Calu3 (cell line): ENCODE measurements at regions of chr9 and their contacts with region 1.

Region 1: DNA sequence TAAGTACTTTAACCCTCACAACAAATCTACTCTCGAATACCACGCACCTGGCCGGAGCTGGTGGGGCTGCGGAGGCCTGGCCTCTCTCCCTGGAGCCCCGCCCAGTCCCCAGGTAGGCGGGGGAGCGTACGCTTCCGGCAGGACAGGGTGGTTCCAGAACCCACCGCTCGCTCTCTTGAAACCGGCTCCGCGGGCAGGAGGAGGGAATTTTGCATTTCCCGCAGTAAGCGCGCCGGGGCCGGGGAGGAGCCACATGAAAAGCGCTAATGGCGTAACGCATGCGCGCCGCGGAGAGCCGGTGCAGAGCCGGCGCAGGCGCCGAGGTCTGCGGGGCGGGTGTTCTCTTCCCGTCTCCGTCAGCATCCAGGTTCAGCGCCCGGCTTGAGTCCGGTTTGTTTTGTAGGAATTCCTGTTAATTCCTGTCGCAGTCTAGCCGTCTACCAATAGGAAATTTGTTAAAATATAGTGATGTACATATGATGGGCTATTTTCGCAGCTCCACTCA is 20.8 kb downstream of the CAVIN4 start:
- DNase-seq: peak; percentile 87
- H3K4me3 Mint-ChIP-seq: peak overlapping the region; percentile 48
- H3K27ac Mint-ChIP-seq: no peak overlapping the region
- H3K4me1 Mint-ChIP-seq: peaks cover 21% of the 10 kb centered on the region
- H3K27me3 Mint-ChIP-seq: no peaks in the 10 kb centered on the region
- CTCF ChIP-seq: no peak

Region 2: DNA sequence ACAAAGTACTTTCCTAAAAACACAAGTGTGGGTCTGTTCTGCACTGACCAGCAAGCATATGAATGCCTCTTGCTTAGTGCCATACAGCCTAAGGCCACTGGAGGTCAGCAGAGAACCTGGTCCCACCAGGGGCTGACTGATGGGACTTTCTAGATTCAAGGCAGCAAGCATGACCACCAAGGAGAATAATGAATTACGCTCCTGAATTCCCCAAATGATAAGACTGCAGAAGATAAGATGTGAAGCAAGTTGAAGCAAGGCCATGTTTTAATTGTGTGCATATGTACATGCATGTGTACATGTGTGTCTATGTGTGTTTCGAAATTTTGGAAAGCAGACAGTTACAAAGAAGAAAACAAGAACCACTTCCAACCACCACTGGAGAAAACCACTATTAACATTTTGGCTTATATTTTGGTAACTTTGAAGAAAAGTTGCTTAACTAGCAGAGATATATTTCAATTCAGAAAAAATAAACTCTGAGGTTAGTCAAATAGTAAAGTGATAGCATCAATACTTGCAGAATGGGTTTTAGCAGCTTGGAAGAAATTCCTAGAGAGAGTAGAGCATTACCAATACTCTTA is 570.4 kb before region 1 on chr9:
- CTCF ChIA-PET with region 1: no interaction called
- intact Hi-C with region 1: loop called (anchors 2 kb)
- DNase-seq: peak; percentile 60
- H3K4me3 Mint-ChIP-seq: no peak overlapping the region
- H3K27ac Mint-ChIP-seq: no peak overlapping the region
- H3K4me1 Mint-ChIP-seq: no peaks in the 10 kb centered on the region
- H3K27me3 Mint-ChIP-seq: no peaks in the 10 kb centered on the region
- CTCF ChIP-seq: peak; percentile 69

Region 3: GRCh38 chr9:100352727-100353505 is 245.8 kb before region 1 on chr9 and contains the start of gene TEX10:
- CTCF ChIA-PET with region 1: no interaction called
- intact Hi-C with region 1: loop called (anchors 10 kb)
- DNase-seq: peak; percentile 85
- H3K4me3 Mint-ChIP-seq: peak within 1 kb of the TSS; percentile 91
- H3K27ac Mint-ChIP-seq: peak within 1 kb of the TSS; percentile 91
- H3K4me1 Mint-ChIP-seq: peaks cover 21% of the 10 kb centered on the region
- H3K27me3 Mint-ChIP-seq: no peaks in the 10 kb centered on the region
- CTCF ChIP-seq: no peak
- total RNA-seq, gene TEX10: 15.3 and 17.7 TPM in 2 replicates

Region 4: DNA sequence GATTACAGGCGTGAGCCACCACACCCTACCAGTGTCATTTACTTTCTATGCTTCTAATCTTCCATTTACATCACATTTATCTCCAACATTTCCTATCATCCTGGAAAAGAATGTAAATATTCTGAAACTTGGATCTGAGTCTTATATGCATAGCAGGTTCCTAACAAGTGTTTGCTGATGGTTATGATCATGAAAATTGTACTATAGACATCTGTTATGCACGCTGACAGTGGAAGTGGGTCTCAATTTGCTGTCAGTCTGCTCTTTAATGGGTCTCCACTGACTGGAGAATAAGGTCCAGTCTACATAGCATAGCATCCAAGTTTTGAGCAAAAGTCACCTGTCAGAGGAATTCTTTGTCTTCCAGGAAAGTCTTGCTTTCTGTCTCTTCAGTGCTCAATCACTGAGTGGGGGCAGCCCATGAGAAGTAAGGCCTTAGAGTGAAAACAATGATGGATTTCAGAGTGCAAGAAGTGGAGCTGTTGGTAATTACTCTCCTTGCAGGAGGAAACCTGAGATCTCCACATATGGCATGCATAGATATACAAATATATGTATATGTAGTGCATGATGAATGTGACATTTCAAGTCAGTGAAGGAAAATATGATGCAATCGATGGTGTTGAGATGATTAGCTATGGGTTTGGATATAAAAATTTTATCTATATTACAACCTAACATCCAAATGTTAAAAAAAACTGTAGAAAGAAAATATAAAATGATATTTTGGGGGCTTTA is 201.0 kb before region 1 on chr9:
- CTCF ChIA-PET with region 1: no interaction called
- intact Hi-C with region 1: no loop called
- DNase-seq: no peak
- H3K4me3 Mint-ChIP-seq: no peak overlapping the region
- H3K27ac Mint-ChIP-seq: no peak overlapping the region
- H3K4me1 Mint-ChIP-seq: no peaks in the 10 kb centered on the region
- H3K27me3 Mint-ChIP-seq: no peaks in the 10 kb centered on the region
- CTCF ChIP-seq: no peak

Region 5: DNA sequence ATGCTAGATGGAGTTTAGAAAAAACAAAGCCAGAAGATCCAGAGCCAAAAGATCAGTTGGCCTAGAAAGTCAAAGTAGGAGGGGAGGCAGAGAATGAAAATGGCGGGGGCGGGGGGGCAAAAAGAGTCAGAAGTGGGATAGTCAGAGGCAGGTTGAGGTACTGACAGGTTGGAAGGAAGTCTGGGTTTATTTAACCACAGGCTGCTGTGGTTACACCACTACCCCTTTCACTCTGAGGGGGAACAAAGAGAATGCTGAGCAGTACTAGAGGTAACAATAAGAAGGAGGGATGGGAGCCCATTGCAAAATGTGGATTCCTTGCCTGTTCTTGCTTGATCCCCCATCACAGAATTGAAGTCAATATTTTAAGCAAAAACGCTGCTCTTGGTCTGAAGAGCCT is 90.9 kb after region 1 on chr9:
- CTCF ChIA-PET with region 1: no interaction called
- intact Hi-C with region 1: loop called (anchors 5 kb)
- DNase-seq: no peak
- H3K4me3 Mint-ChIP-seq: no peak overlapping the region
- H3K27ac Mint-ChIP-seq: no peak overlapping the region
- H3K4me1 Mint-ChIP-seq: no peaks in the 10 kb centered on the region
- H3K27me3 Mint-ChIP-seq: peaks cover 21% of the 10 kb centered on the region
- CTCF ChIP-seq: no peak

Region 6: DNA sequence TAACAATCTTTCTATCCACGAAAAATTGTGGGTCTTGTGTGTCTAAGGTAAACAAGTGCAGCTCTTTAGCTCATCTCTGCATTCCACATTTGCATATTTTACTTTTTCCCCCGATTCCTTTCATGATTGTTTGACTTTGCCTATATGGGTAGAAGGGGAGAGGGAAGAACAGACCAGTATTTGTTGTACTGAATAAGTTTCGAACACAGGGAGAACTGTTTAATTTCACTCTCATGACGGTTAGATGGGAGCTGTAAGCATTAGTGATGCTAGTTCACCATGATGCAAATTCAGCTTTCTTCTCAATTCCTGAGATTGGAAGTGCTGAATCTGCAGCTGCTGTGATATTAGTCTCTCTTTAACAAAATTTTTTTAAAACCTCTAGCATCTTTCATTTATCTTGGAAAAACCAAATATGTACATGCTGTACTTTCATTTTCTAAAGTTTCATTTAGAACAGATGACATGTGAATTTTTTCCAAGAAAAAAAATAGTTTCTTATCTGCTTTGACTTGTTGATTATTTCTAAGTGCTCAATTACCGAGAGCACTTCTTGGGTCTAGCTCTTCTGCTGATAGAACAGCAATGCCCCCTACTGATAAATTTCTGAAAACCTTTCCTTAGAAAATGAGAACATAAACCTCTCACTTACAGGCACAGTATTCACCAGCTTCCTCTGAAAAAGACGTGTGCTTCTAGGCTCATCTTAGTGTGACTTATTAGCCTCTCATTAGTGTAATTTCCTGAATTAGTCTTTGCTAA is 636.6 kb after region 1 on chr9:
- CTCF ChIA-PET with region 1: no interaction called
- intact Hi-C with region 1: loop called (anchors 1 kb)
- DNase-seq: no peak
- H3K4me3 Mint-ChIP-seq: no peak overlapping the region
- H3K27ac Mint-ChIP-seq: no peak overlapping the region
- H3K4me1 Mint-ChIP-seq: no peaks in the 10 kb centered on the region
- H3K27me3 Mint-ChIP-seq: no peaks in the 10 kb centered on the region
- CTCF ChIP-seq: no peak

Region 7: DNA sequence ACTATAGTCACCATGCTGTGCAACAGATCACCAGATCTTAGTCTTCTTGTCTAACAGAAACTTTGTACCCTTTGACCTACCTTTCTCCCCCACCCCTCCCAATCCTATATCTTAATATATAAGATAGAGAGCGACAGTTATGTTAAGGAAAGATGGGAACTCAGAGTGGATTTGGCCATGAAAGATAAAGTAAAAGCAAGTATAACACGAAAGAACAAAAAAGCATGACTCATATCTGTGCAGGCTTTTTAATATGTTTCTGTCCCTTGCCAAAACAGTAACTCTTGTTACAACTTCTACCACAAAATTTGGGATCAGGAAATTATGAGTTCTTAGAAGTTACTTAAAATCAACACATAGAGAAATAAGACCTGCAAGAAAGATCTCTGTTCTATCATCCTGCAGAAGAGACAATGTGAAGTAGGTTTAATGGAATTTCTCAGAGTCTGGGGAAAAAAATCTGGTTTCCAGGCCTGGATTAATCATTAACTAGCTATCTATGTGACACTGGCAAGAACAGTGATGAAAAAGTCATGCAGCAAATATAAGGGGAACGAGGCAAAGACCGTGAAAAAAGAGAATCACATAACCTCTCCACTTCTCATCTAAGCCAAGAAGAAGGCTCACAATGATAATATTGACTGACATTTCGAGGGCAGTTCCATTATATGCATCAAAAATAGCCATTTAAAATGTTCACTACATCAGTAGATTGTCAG is 767.5 kb after region 1 on chr9:
- CTCF ChIA-PET with region 1: no interaction called
- intact Hi-C with region 1: loop called (anchors 5 kb)
- DNase-seq: no peak
- H3K4me3 Mint-ChIP-seq: no peak overlapping the region
- H3K27ac Mint-ChIP-seq: peak overlapping the region; percentile 20
- H3K4me1 Mint-ChIP-seq: peaks cover 40% of the 10 kb centered on the region
- H3K27me3 Mint-ChIP-seq: no peaks in the 10 kb centered on the region
- CTCF ChIP-seq: no peak